ENCODE measurements at regions of chr18 and their contacts with region 1.

Region 1: DNA sequence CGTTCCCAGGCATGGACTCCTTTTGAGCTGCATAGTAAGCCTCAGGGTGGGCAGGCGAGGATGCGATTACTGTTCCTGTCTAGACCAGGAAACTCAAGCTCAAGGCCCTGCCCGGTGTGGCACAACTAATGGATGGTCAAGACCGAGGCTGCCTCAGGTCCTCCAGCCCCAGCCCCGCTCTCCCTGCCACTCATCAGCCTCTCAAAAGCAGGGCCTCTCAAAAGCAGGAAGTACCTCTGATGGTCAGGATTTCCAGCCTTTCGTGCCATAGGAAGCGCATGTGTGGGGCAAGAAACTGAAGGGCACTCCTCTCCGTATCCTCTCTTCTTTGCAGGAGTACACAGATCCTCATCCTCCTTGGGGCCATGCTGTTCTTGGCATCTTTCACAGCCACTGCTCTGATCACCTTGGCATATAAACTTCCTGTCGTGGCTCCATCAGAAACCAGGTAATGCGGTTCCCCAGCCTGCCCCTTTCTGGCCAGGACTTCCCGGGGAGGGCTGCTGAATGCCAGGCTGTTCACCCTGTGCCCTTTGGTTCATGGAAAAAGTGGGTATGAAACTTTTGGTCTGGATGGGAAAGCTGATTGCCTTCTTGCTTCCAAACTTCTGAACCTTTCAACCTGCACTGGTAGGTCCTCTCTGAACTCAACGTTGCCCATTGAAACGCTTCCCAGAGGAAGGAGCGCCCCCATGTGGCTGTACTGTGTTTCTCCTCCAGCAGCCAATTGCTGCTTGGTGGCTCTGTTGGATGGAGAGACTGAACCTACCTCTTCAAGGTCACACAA is 82.8 kb upstream of the SEC11C start:
- DNase-seq: peak; percentile 77
- ATAC-seq: peak; percentile 45
- H3K4me3 ChIP-seq: no peak overlapping the region
- H3K27ac ChIP-seq: no peak overlapping the region
- H3K4me1 ChIP-seq: peaks cover 49% of the 10 kb centered on the region
- H3K27me3 ChIP-seq: no peaks in the 10 kb centered on the region
- CTCF ChIP-seq: peak; percentile 89

Region 2: DNA sequence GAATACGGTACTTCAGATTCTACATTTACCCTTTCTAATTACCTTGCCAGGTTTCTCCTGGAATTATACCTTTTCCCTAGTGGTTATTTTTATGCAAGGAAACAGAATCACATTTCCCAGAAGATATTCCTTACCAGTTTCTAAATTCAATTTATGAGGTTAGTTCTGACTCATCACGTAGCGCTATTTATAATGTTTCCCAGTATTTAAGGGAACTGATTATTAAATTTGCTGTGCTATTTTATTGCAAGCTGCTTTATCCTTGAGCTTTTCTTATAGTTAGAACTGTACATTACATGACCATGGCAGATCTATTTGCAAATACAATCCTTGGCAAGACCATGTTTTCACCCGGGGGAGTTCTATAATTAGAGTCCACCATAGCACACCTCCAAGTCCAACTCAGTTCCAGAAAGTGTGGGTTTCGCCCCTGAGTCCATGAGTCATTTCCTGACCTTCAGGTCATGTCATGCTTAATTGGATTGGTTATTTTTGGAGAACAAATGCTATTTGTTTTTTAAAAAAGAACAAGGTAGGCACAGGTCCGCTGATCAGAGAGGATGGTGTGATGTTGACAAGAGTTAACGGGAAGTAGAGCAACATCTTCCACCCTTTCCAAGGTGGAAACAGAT is 65.6 kb before region 1 on chr18:
- CTCF ChIA-PET with region 1: no interaction called
- POLR2A ChIA-PET with region 1: interaction called, 3 read pairs
- intact Hi-C with region 1: loop called (anchors 1 kb)
- DNase-seq: peak; percentile 65
- ATAC-seq: peak; percentile 68
- H3K4me3 ChIP-seq: peak overlapping the region; percentile 22; the same call in 1 of the 2 replicates
- H3K27ac ChIP-seq: peak overlapping the region; percentile 92
- H3K4me1 ChIP-seq: peaks cover 43% of the 10 kb centered on the region
- H3K27me3 ChIP-seq: no peaks in the 10 kb centered on the region
- CTCF ChIP-seq: no peak; the same call in 1 of the 2 replicates

Region 3: DNA sequence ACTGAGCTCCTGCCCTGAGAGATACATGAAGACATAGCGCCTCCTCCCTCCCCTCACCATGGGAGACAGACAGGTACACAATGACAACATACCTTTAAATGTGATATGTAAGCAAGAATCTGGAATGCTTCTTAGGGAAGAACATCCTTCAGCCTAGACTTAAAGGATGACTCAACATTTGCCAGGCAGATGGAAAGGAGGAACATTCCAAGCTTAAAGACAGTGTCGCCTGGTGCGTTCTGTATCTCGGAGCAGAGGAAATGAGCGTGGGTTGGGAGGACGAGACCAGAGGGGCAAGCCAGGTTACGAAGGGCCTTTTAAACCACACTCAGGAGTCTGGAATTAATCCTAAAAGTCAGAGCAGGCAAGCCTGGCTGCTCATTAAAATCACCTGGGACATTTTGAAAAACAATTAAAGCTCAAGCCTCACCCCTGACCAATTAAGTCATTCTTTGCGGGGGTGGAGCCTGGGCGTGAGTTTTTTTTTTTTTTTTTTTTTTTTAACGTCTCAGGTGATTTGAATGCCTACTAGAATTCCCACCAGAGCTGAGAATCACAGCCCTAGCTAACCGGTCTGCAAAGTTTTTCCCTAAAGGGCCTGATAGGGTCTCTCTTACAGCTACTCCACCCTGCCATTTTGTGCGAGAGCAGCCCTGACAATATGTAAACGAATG is 48.5 kb before region 1 on chr18:
- CTCF ChIA-PET with region 1: no interaction called
- POLR2A ChIA-PET with region 1: no interaction called
- intact Hi-C with region 1: loop called (anchors 2 kb)
- DNase-seq: peak; percentile 88
- ATAC-seq: peak; percentile 97
- H3K4me3 ChIP-seq: peak overlapping the region; percentile 49
- H3K27ac ChIP-seq: peak overlapping the region; percentile 64
- H3K4me1 ChIP-seq: peaks cover 14% of the 10 kb centered on the region; the same call in 1 of the 2 replicates
- H3K27me3 ChIP-seq: no peaks in the 10 kb centered on the region
- CTCF ChIP-seq: peak; percentile 20; the same call in 1 of the 2 replicates

Region 4: GRCh38 chr18:59446012-59446411 is 389.1 kb after region 1 on chr18:
- CTCF ChIA-PET with region 1: no interaction called
- POLR2A ChIA-PET with region 1: no interaction called
- intact Hi-C with region 1: no loop called
- DNase-seq: no peak
- ATAC-seq: no peak
- H3K4me3 ChIP-seq: no peak overlapping the region
- H3K27ac ChIP-seq: no peak overlapping the region
- H3K4me1 ChIP-seq: no peaks in the 10 kb centered on the region
- H3K27me3 ChIP-seq: no peaks in the 10 kb centered on the region
- CTCF ChIP-seq: no peak

Region 5: DNA sequence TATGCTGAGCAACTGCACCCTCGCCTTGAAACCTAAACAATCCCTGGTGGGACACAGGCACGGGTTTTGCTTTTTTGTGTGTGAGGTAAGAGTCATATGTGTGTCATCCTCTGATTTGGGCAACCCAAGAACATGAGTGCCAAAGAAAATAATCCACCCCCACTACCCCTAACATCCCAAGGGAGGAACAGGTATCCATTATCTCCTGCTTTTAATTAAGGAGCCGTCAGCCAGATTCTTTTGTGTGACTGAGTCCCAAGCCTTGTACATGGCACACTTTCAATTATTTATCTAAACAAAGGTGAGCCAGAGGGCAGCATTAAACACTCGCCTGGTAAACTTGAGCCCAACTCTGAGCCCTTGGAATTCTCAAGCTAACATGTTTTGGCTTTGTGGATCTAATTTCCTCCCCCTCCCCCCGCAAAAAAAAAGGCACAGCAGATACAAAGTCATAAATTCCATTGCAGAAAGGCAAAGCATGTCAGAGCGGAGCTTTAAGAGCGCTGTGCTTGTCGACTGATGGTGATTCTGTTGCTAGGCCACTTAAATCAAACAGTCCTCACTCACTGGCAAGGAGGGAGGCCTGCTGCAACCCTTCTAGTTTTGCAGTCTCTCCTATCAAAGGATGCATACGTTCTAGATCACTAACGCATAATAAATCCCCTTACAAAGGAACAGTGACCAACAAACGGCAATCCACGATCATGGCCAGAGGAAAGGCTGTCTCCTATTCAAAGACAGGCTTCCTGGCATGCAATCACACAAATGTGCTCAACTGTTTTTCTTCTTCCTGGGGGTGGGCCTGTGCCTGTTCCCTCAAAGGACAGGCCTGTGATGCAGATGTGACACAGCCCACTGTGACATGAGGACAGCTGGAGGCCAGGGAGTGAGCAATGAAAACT is 445.6 kb after region 1 on chr18:
- CTCF ChIA-PET with region 1: no interaction called
- POLR2A ChIA-PET with region 1: no interaction called
- intact Hi-C with region 1: no loop called
- DNase-seq: peak; percentile 73
- ATAC-seq: peak; percentile 80
- H3K4me3 ChIP-seq: no peak overlapping the region
- H3K27ac ChIP-seq: peak overlapping the region; percentile 72
- H3K4me1 ChIP-seq: peaks cover 28% of the 10 kb centered on the region
- H3K27me3 ChIP-seq: no peaks in the 10 kb centered on the region
- CTCF ChIP-seq: no peak